K562 (cell line): ENCODE measurements at regions of chr21 and their contacts with region 1.

Region 1: DNA sequence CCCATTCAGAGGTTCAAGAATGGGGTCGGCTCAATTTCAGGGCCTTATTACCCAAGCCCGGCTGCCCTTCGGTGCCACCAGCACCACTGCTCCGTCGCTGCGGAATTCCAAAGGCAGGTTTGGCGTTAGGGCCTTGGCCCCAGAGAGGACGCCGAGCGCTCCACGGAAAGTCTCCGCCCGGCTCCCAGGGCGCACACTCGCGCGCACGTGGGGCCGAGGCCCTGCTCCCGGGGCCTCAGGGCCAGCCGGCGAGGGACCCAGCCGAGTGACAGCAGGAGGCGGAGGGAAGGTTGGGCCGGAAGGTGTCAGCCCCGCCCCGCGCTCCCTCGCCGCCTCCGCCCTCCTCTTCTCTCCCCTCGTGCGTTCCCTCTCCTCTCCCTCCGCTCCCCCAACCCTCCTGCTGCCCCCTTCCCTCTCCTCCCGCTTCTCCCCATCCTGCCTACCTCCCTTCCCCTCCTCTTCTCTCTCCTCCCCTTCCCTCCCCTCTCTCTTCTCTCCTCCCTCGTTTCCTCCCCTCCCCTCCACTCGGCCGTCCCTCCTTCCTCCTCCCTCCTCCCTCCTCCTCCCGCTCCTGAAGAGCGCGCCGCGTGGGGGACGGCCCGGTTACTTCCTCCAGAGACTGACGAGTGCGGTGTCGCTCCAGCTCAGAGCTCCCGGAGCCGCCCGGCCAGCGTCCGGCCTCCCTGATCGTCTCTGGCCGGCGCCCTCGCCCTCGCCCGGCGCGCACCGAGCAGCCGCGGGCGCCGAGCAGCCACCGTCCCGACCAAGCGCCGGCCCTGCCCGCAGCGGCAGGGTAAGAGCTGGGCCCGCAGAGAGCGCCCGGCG is at the start of gene ETS2:
- DNase-seq: peak; percentile 93 to 97 (median 95)
- ATAC-seq: peak; percentile 89
- H3K4me3 ChIP-seq: peak within 1 kb of the TSS; percentile 69
- H3K27ac ChIP-seq: peak within 1 kb of the TSS; percentile 84
- H3K4me1 ChIP-seq: peaks cover 43 to 45% of the 10 kb centered on the region in 2 experiments
- H3K27me3 ChIP-seq: no peaks in the 10 kb centered on the region; a peak in 1 of 5 replicates
- CTCF ChIP-seq: no peak
- EP300 ChIP-seq: no peak
- POLR2A ChIP-seq: peak; percentile 92
- RAD21 ChIP-seq: peak in 1 of 2 experiments; percentile 34; a peak in 2 of 4 replicates
- polyA plus RNA-seq, gene ETS2: 1.7 to 2.2 TPM

Region 2: GRCh38 chr21:38819714-38820183 is 14.2 kb after region 1 on chr21:
- CTCF ChIA-PET with region 1: no interaction called
- POLR2A ChIA-PET with region 1: interaction called, 38 read pairs
- in situ Hi-C with region 1: no loop called
- intact Hi-C with region 1: no loop called
- DNase-seq: no peak
- ATAC-seq: no peak
- H3K4me3 ChIP-seq: no peak overlapping the region
- H3K27ac ChIP-seq: no peak overlapping the region
- H3K4me1 ChIP-seq: no peaks in the 10 kb centered on the region
- H3K27me3 ChIP-seq: no peaks in the 10 kb centered on the region
- CTCF ChIP-seq: no peak
- EP300 ChIP-seq: no peak
- POLR2A ChIP-seq: no peak
- RAD21 ChIP-seq: no peak

Region 3: GRCh38 chr21:38831526-38832467 is 26.3 kb after region 1 on chr21:
- CTCF ChIA-PET with region 1: no interaction called
- POLR2A ChIA-PET with region 1: interaction called, 14 read pairs
- in situ Hi-C with region 1: no loop called
- intact Hi-C with region 1: loop called (anchors 2 kb)
- DNase-seq: peak in 2 of 4 experiments; percentile 52 to 79
- ATAC-seq: peak; percentile 94
- H3K4me3 ChIP-seq: no peak overlapping the region
- H3K27ac ChIP-seq: peak overlapping the region; percentile 71; the same call in 2 of the 3 replicates
- H3K4me1 ChIP-seq: peaks cover 0 to 25% of the 10 kb centered on the region in 2 experiments; a peak in 3 of 5 replicates
- H3K27me3 ChIP-seq: no peaks in the 10 kb centered on the region
- CTCF ChIP-seq: no peak
- EP300 ChIP-seq: peak; percentile 85; the same call in 1 of the 2 replicates
- POLR2A ChIP-seq: no peak
- RAD21 ChIP-seq: peak in 1 of 2 experiments; percentile 3; a peak in 2 of 4 replicates

Region 4: GRCh38 chr21:38853421-38853919 is 47.9 kb after region 1 on chr21:
- CTCF ChIA-PET with region 1: no interaction called
- POLR2A ChIA-PET with region 1: interaction called, 3 read pairs
- in situ Hi-C with region 1: no loop called
- intact Hi-C with region 1: loop called (anchors 5 kb)
- DNase-seq: peak in 1 of 4 experiments; percentile 65
- ATAC-seq: peak; percentile 41
- H3K4me3 ChIP-seq: no peak overlapping the region
- H3K27ac ChIP-seq: no peak overlapping the region
- H3K4me1 ChIP-seq: peaks cover 37 to 62% of the 10 kb centered on the region in 2 experiments
- H3K27me3 ChIP-seq: no peaks in the 10 kb centered on the region
- CTCF ChIP-seq: no peak
- EP300 ChIP-seq: 0 out of 2 replicates have a peak, but pooled peaks have one; percentile 7
- POLR2A ChIP-seq: no peak
- RAD21 ChIP-seq: no peak

Region 5: GRCh38 chr21:38913120-38913892 is 107.8 kb after region 1 on chr21:
- CTCF ChIA-PET with region 1: interaction called, 3 read pairs
- POLR2A ChIA-PET with region 1: no interaction called
- in situ Hi-C with region 1: no loop called
- intact Hi-C with region 1: loop called (anchors 10 kb)
- DNase-seq: peak; percentile 49 to 72 (median 60)
- ATAC-seq: peak; percentile 73
- H3K4me3 ChIP-seq: no peak overlapping the region
- H3K27ac ChIP-seq: no peak overlapping the region
- H3K4me1 ChIP-seq: peaks cover 5 to 12% of the 10 kb centered on the region in 2 experiments; a peak in 4 of 5 replicates
- H3K27me3 ChIP-seq: peaks cover 34 to 62% of the 10 kb centered on the region in 2 experiments
- CTCF ChIP-seq: no peak
- EP300 ChIP-seq: no peak
- POLR2A ChIP-seq: no peak
- RAD21 ChIP-seq: no peak

Region 6: DNA sequence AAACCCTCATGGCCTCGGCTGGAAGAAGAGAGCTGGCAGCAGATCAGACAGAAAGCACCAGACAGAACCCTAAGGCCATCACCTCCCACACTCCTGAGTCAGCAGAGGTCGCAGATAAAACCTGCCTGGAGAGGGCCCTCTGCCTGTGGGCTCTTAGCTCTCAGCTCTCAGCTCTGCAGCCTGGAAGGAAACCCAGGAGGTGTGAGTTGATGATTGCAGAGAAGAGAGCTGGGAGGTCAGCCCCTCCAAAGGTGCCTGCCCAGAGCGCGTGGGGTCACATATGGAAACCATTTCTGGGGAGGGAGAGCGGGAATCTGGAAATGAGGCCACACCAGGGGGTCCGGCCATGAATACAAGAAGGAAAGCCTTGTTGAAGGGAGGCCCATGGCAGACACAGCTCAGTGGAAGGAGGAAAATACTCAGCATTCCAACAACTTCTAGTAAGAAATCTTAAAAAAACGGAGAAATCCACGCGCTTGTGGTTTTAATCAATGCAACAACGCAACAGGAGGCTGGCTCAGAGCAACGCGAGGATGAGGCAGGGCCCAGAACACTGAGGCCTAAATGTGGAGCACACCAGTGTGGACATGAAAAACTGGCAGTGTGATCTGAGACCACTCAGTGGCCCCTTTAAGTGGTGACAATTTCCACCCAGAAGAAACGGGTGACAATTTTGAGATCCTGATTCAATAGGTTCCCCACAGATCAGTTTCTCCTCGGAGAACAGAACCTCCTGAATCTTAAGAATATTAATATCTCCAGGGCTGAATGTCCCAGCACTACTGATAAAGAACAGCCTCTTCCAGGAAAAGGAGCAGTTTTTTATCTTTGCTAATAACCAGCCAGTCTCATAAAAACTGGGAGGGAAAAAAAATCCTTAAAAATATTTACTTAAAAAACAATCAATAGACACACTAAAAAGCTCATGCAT is 332.0 kb after region 1 on chr21:
- CTCF ChIA-PET with region 1: no interaction called
- POLR2A ChIA-PET with region 1: no interaction called
- in situ Hi-C with region 1: no loop called
- intact Hi-C with region 1: loop called (anchors 5 kb)
- DNase-seq: peak in 3 of 4 experiments; percentile 32 to 72 (median 71)
- ATAC-seq: peak; percentile 85
- H3K4me3 ChIP-seq: no peak overlapping the region
- H3K27ac ChIP-seq: no peak overlapping the region
- H3K4me1 ChIP-seq: peaks cover 0 to 6% of the 10 kb centered on the region in 2 experiments; a peak in 3 of 5 replicates
- H3K27me3 ChIP-seq: peaks cover 14 to 29% of the 10 kb centered on the region in 2 experiments; a peak in 4 of 5 replicates
- CTCF ChIP-seq: peak; percentile 34 to 47 (median 39); a peak in 4 of 6 replicates
- EP300 ChIP-seq: peak; percentile 14; the same call in 1 of the 2 replicates
- POLR2A ChIP-seq: no peak
- RAD21 ChIP-seq: peak; percentile 24 to 42; a peak in 3 of 4 replicates